ENCODE measurements at regions of chr6 and their contacts with region 1.

Region 1: GRCh38 chr6:89494131-89494796 is 61.3 kb downstream of the ANKRD6 start:
- DNase-seq: peak; percentile 49 to 75 (median 70)
- H3K4me3 ChIP-seq: no peak overlapping the region
- H3K27ac ChIP-seq: no peak overlapping the region
- H3K4me1 ChIP-seq: peaks cover 0 to 36% (median 9%) of the 10 kb centered on the region in 4 experiments
- H3K27me3 ChIP-seq: no peaks in the 10 kb centered on the region

Region 2: GRCh38 chr6:89509766-89510281 is 15.6 kb after region 1 on chr6:
- CTCF ChIA-PET with region 1: interaction called, 20 read pairs
- POLR2A ChIA-PET with region 1: interaction called, 3 read pairs
- DNase-seq: peak; percentile 71 to 91 (median 91)
- H3K4me3 ChIP-seq: peak overlapping the region in 1 of 7 experiments; percentile 54
- H3K27ac ChIP-seq: no peak overlapping the region
- H3K4me1 ChIP-seq: peaks cover 2 to 44% (median 17%) of the 10 kb centered on the region in 4 experiments
- H3K27me3 ChIP-seq: no peaks in the 10 kb centered on the region

Region 3: GRCh38 chr6:89708316-89708715 is 214.1 kb after region 1 on chr6:
- CTCF ChIA-PET with region 1: no interaction called
- POLR2A ChIA-PET with region 1: no interaction called
- DNase-seq: no peak
- H3K4me3 ChIP-seq: no peak overlapping the region
- H3K27ac ChIP-seq: no peak overlapping the region
- H3K4me1 ChIP-seq: no peaks in the 10 kb centered on the region
- H3K27me3 ChIP-seq: no peaks in the 10 kb centered on the region